Mammary epithelial cell (primary cell): ENCODE measurements at regions of chr19 and their contacts with region 1.

Region 1: DNA sequence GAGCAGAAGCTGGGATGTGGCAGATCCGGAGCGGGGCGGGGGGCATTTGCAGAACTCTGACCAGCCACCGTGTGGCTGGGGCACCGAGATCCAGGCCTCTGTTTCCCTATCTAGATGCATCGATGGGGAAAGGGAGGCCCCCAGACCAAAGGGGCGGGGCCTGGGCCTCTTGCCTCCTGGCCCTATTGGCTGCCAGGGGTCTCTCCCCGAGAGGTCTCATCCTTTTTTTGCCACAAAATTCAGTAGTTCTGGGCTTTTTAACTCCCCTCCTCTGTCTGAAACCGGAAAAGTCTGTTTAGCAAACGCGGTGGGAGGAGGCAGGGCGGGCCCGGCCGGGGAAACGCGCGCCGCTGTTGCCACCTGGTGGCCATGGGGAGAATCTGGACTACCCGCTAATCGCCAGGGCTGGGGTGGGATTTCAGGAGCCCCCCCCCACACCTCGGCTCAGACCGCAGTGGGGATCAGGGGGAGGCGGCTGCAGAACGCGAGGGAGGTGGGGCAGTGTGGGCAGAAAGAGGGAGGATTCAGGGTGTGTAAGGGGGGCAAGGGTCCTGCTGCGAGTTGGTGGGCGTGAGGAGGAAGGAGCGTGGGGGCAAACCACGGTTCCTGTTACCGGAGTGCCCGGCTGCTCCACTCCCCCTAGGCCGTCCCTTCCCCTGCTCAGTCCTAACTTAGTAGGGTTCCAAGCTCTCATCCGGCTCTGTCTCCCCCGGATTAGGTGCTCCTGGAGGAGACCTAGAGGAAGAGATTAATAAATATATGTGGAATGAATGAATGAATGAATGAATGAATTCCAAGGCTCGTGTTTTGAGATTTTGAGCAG is 28.3 kb downstream of the IL12RB1 start:
- DNase-seq: peak; percentile 42
- H3K4me3 ChIP-seq: no peak overlapping the region
- H3K27ac ChIP-seq: no peak overlapping the region
- H3K4me1 ChIP-seq: peaks cover 3% of the 10 kb centered on the region
- H3K27me3 ChIP-seq: peaks cover 2% of the 10 kb centered on the region
- CTCF ChIP-seq: peak; percentile 51 to 89

Region 2: DNA sequence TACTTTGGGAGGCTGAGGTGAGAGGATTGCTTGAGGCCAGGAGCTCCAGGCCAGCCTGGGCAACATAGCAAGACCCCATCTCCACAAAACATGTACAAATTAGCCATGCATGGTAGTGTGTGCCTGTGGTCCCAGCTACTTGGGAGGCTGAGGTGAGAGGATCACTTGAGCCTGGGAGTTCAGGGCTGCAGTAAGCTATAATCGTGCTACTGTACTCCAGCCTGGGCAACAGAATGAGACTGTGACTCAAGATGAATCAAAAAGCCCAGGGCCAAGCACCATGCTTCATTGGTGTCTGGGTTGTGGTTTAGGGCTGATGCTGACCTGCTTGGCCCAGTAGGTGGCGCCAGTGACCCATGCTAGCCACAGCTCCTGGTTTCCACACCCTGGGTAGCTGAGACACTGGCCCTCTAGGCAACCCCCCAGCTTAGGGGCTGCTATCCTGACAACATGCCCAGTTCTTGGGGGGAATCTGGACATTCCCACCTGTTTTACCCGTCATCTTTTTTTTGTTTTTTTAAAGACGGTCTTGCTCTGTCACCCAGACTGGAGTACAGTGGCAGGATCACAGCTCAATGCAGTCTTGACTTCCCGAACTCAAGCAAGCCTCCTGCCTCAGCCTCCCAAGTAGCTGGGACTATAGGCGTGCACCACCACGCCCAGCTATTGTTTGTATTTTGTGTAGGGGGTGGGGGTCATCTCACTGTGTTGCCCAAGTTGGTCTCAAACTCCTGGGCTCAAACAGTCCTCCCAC is 120.2 kb before region 1 on chr19:
- CTCF ChIA-PET with region 1: interaction called, 6 read pairs
- dilution Hi-C with region 1: no loop called
- in situ Hi-C with region 1: loop called in 1 of 2 experiments (anchors 25 kb)
- intact Hi-C with region 1: loop called (anchors 2 kb)
- DNase-seq: peak; percentile 90
- H3K4me3 ChIP-seq: no peak overlapping the region
- H3K27ac ChIP-seq: no peak overlapping the region
- H3K4me1 ChIP-seq: peaks cover 11% of the 10 kb centered on the region
- H3K27me3 ChIP-seq: no peaks in the 10 kb centered on the region
- CTCF ChIP-seq: peak; percentile 93 to 99

Region 3: GRCh38 chr19:17985037-17985818 is 73.2 kb before region 1 on chr19:
- CTCF ChIA-PET with region 1: no interaction called
- dilution Hi-C with region 1: no loop called
- in situ Hi-C with region 1: no loop called
- intact Hi-C with region 1: no loop called
- DNase-seq: no peak
- H3K4me3 ChIP-seq: no peak overlapping the region
- H3K27ac ChIP-seq: no peak overlapping the region
- H3K4me1 ChIP-seq: no peaks in the 10 kb centered on the region
- H3K27me3 ChIP-seq: no peaks in the 10 kb centered on the region
- CTCF ChIP-seq: no peak

Region 4: GRCh38 chr19:18017275-18018083 is 40.9 kb before region 1 on chr19:
- CTCF ChIA-PET with region 1: no interaction called
- dilution Hi-C with region 1: loop called (anchors 5 kb)
- in situ Hi-C with region 1: loop called in 1 of 2 experiments (anchors 5 kb)
- intact Hi-C with region 1: no loop called
- DNase-seq: no peak
- H3K4me3 ChIP-seq: no peak overlapping the region
- H3K27ac ChIP-seq: no peak overlapping the region
- H3K4me1 ChIP-seq: peaks cover 18% of the 10 kb centered on the region
- H3K27me3 ChIP-seq: no peaks in the 10 kb centered on the region
- CTCF ChIP-seq: no peak